A549 (cell line): ENCODE measurements at regions of chr15 and their contacts with region 1.

Region 1: DNA sequence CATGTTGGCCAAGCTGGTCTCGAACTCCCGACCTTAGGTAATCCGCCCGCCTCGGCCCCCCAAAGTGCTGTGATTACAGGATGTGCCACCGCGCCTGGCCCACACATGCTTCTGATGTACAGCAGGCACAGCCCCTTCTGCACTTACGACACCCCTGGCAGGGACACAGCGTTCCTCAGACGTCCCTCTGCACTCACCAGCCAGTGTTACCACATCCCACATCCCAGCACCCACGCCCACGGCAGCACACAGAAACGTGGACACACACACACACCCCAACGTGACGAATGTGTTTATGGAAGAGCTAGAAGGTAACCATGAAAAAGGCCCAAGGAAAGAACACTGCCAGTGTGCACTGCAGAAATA is 576 bp upstream of the RPAP1 start:
- DNase-seq: no peak
- ATAC-seq: no peak
- H3K4me3 ChIP-seq: peak overlapping the region; percentile 81
- H3K27ac ChIP-seq: peak overlapping the region; percentile 89 to 96
- H3K4me1 ChIP-seq: peaks cover 16% of the 10 kb centered on the region
- CTCF ChIP-seq: no peak
- EP300 ChIP-seq: no peak
- POLR2A ChIP-seq: no peak
- RAD21 ChIP-seq: no peak

Region 2: GRCh38 chr15:40914486-40914885 is 630.1 kb before region 1 on chr15:
- CTCF ChIA-PET with region 1: no interaction called
- POLR2A ChIA-PET with region 1: no interaction called
- DNase-seq: no peak
- ATAC-seq: peak in 1 of 2 experiments; percentile 52; a peak in 3 of 6 replicates
- H3K4me3 ChIP-seq: no peak overlapping the region
- H3K27ac ChIP-seq: no peak overlapping the region
- H3K4me1 ChIP-seq: peaks cover 6% of the 10 kb centered on the region; the same call in 2 of the 3 replicates
- CTCF ChIP-seq: peak; percentile 18; the same call in 1 of the 3 replicates
- EP300 ChIP-seq: no peak
- POLR2A ChIP-seq: no peak
- RAD21 ChIP-seq: peak; percentile 28 to 46; a peak in 4 of 5 replicates

Region 3: GRCh38 chr15:41493205-41493901 is 51.3 kb before region 1 on chr15 and contains the start of gene ITPKA:
- CTCF ChIA-PET with region 1: no interaction called
- POLR2A ChIA-PET with region 1: interaction called, 10 read pairs
- DNase-seq: peak; percentile 47 to 61
- ATAC-seq: peak; percentile 77 to 81
- H3K4me3 ChIP-seq: peak within 1 kb of the TSS; percentile 61
- H3K27ac ChIP-seq: peak within 1 kb of the TSS; percentile 79 to 90
- H3K4me1 ChIP-seq: peaks cover 16% of the 10 kb centered on the region; the same call in 2 of the 3 replicates
- CTCF ChIP-seq: no peak
- EP300 ChIP-seq: no peak
- POLR2A ChIP-seq: no peak
- RAD21 ChIP-seq: no peak
- polyA plus RNA-seq, gene ITPKA: 0.52 and 0.73 TPM in 2 replicates

Region 4: GRCh38 chr15:41557673-41558399 is 13.2 kb after region 1 on chr15:
- CTCF ChIA-PET with region 1: interaction called, 12 read pairs
- POLR2A ChIA-PET with region 1: interaction called, 15 read pairs
- DNase-seq: peak; percentile 57 to 67
- ATAC-seq: peak; percentile 61 to 89; a peak in 5 of 6 replicates
- H3K4me3 ChIP-seq: peak overlapping the region; percentile 82
- H3K27ac ChIP-seq: peak overlapping the region; percentile 81 to 98; a peak in 2 of 6 replicates
- H3K4me1 ChIP-seq: peaks cover 10% of the 10 kb centered on the region; the same call in 2 of the 3 replicates
- CTCF ChIP-seq: peak; percentile 66
- EP300 ChIP-seq: no peak
- POLR2A ChIP-seq: no peak
- RAD21 ChIP-seq: peak; percentile 58 to 61

Region 5: DNA sequence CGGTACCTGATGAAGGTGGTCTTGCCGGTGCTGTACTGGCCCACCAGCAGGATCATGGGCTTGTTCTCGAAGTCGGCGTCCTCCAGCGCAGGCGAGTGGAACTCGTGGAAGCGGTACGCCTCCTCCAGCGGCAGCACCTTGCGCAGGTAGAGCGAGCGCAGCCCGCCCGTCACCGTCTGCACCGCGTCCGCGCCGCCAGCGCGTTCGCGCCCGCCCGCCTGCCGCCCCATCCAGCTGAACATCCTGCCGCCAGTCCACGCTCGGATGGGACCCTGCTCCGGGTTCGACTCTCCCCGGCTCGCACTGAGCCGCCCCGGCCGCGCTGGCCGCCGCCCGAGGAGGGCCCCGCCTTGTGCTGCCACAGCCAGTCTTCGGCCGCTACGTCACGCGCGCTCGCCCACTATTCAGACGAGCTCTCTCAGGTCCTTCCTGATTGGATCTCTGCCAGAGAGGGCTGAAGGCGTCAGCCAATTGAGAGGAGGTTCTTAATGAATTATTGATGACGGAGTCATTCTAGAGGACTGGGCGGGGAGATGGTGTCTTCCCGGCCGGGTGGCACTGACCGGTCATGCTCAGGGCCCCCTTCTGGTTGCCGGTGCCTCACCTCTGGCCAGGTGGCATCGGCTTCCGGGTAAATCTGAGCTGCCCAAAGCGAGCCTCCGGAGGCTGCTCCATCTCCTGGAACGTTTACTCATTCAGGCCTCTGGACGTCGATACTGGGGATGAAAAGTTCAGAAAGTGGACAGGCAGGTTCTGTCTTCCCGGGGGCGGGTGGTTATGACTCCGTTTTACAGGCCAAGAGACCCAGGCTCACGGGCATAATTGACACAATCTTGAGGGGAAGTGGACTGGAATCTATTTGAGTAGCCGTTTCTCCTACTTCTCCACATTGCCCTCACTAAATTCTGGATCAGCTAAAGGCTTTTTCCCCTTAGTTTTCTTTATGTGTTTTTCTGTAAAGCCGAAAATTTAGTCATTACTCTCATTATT is 427.9 kb after region 1 on chr15 and contains the start of gene EHD4:
- CTCF ChIA-PET with region 1: no interaction called
- POLR2A ChIA-PET with region 1: interaction called, 11 read pairs
- DNase-seq: peak; percentile 95 to 98
- ATAC-seq: peak; percentile 96 to 97
- H3K4me3 ChIP-seq: peak within 1 kb of the TSS; percentile 60
- H3K27ac ChIP-seq: peak within 1 kb of the TSS; percentile 82 to 95
- H3K4me1 ChIP-seq: peaks cover 13% of the 10 kb centered on the region; the same call in 1 of the 3 replicates
- CTCF ChIP-seq: peak; percentile 22; the same call in 1 of the 3 replicates
- EP300 ChIP-seq: no peak
- POLR2A ChIP-seq: peak; percentile 68
- RAD21 ChIP-seq: peak; percentile 24 to 35
- polyA plus RNA-seq, gene EHD4: 9.0 and 9.3 TPM in 2 replicates